ENCODE measurements at regions of chr5 and their contacts with region 1.

Region 1: DNA sequence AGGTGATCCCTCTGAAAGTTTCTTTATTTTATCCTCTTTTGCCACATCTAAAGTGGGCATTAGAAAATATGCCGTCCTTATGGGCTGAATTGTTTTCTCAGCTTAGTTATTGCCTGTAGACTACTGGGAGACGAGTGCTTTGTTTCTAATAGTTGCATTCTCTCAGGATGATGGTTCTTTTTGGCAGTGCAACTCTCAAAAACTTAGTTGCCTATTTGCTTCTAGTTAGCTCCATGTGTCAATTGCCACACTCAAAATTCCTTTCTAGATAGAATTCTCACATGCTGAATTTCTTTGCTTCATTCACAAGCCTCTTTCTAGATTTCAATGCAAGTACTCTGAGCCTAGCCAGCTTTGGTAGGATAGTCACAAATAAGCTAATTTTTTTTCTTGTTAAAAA is 155.5 kb downstream of the FGF10 start:
- DNase-seq: no peak
- H3K4me3 ChIP-seq: no peak overlapping the region
- H3K27ac ChIP-seq: no peak overlapping the region
- H3K27me3 ChIP-seq: no peaks in the 10 kb centered on the region
- CTCF ChIP-seq: no peak

Region 2: DNA sequence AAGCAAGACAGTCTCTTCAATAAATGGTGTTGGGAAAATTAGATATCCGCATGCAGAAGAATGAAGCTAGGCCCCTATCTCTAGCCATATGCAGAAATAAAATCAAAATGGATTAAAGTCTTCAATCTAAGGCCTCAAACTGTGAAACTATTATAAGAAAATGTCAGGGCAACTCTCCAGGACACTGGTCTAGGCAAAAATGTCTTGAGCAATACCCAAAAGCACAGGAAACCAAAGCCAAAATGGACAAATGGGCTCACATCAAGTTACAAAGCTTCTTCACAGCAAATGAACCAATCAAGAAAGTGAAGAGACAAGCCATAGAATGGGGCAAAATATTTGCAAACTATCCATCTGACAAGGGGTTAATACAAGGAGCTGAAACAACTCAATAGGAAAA is 291.9 kb before region 1 on chr5:
- CTCF ChIA-PET with region 1: no interaction called
- POLR2A ChIA-PET with region 1: no interaction called
- DNase-seq: no peak
- H3K4me3 ChIP-seq: no peak overlapping the region
- H3K27ac ChIP-seq: no peak overlapping the region
- H3K27me3 ChIP-seq: no peaks in the 10 kb centered on the region
- CTCF ChIP-seq: no peak

Region 3: DNA sequence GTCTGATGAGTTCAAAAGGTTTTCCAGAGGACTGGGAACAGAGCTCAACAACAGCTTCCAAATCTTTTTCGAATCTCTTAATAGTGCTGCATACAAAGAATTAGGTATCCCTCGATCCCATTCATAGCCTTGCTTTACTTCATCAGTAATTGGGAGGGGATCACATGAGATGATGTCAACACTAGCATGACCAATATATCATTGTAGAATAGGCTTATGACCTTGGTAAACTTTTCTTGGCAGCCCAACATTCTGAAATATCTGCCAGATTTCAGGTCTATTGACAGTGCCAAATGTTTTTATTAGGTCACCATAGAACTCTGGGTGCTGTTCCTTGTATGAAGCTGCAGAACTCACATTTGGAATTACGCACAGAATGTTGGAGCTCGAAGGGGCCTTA is 73.3 kb before region 1 on chr5:
- CTCF ChIA-PET with region 1: interaction called, 12 read pairs
- POLR2A ChIA-PET with region 1: no interaction called
- DNase-seq: no peak
- H3K4me3 ChIP-seq: no peak overlapping the region
- H3K27ac ChIP-seq: no peak overlapping the region
- H3K27me3 ChIP-seq: no peaks in the 10 kb centered on the region
- CTCF ChIP-seq: no peak

Measured in AG04450 (cell line).